GM13977 (cell line): ENCODE measurements at regions of chr16 and their contacts with region 1.

Region 1: GRCh38 chr16:25838724-25839186 is 147.0 kb downstream of the HS3ST4 start:
- DNase-seq: peak; percentile 24
- CTCF ChIP-seq: peak; percentile 72

Region 2: DNA sequence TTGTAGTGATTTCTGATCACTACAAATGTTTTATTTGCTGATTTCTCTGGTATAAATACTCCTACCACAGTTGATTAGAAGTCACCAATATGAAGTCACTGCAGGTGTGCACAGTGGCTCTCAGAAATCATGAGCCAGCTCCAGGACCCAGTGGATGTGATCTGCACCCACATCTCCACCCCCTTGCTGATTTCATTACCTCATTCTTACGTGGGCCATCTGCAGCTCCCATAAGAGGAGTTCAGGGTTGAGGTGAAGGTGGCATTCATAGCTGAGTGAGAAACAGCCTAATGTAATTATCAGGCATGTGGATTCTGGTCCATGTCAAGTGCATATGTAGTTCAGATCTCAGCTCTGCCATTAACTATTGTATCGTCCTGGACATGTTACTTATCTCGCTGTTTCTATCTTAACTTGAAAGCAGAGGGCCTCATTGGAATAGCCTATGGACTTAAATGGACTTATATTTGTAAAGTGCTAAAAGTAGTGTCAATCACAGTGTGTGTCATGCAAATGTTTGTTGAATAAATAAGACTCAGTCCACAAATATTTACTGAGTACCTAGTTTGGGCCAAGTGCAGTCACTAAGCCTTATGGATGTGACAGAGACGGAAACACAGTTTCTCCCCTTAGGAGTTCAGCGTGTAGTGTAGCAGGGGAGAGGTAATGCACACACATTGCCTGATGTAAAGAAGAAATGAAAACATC is 540.4 kb before region 1 on chr16:
- in situ Hi-C with region 1: loop called (anchors 25 kb)
- DNase-seq: no peak
- CTCF ChIP-seq: no peak

Region 3: DNA sequence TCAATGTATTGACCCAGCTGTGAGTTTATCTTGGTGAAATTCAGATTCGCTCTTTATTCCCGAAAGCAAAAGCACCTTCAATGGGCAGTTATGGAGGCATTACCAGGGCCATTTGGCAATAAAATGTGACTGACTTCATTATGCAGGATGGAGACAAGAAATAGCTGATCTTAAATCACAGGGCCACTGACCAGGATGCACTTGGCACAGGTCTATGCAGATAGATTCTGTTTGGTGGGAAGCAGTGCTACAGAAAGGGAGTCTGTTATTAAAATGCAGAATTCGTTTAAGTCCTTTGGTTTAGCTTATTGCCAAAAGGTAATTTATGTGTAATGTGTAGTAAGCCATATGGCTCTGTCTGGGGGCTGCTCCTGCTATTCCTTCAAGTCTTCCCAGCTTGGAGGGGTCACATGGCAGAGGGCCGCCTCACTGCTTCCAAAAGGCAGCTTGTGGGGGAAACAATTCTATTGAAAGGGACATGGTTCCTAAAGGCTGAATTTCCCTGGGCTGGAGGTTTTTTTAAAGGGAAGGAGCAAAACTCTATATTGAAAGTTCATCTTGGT is 92.8 kb after region 1 on chr16:
- in situ Hi-C with region 1: no loop called
- DNase-seq: no peak
- CTCF ChIP-seq: no peak

Region 4: DNA sequence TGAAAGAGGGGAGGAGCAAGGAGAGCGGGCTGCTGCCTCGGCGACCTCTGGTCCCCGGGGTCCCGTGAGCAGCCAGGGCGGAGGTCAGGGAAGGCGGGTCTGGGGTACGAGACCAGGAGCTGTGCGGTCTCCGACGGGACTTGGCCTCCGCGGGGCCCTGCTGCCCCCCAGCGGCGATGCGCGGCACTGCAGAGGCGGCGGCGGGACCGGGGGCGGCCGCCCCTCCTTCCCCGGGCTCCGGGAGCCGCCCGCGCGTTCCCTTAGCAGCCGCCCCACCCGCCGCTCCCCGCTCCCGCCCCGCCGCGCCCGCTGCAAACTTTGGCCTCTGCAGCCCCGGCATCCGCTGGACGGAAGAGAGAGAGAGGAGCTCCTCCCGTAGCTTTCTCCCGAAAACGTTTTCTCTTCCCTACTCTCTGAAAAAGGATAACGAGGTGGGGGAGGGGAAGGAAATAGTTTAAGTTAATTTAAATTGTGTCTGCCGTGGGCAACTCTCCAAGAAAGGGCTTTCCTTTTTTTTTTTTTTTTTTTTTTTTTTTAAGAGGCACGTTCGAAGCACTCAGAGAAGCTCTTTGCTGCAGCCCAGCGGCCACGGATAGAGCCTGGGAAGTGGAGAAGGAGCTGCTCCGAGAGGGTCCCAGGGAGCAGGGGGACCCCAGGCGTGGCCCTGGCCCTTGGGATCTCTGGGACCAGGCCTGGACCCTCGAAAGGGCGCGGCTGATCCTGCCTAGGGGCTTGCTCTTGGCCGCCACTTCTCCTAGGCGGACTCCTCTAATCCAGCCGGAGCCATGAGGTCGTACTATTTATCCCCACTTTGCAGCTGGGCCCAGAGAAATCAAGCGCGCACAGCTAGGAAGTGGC is 1271.1 kb after region 1 on chr16:
- in situ Hi-C with region 1: loop called (anchors 25 kb)
- DNase-seq: peak; percentile 87
- CTCF ChIP-seq: peak; percentile 98

Region 5: DNA sequence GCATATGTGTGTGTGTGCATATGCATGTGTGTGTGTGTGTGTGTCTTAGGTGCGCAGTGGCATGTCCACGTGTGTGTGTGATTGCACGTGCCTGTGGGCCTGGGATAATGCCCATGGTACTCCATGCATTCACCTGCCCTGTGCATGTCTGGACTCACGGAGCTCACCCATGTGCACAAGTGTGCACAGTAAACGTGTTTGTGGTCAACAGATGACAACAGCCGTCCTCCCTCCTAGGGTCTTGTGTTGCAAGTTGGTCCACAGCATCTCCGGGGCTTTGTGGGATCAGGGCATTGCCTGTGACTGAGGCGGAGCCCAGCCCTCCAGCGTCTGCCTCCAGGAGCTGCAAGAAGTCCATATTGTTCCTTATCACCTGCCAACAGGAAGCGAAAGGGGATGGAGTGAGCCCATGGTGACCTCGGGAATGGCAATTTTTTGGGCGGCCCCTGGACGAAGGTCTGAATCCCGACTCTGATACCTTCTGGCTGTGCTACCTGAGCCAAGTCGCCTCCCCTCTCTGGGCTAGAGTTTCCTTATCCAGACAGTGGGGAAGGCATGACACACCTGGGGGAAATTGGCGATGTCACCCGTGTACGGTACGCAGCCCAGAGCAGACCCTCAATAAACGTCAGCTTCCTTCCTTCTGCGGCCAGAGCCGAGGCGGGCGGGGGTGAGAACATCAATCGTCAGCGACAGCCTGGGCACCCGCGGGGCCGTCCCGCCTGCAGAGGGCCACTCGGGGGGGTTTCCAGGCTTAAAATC is 1610.9 kb after region 1 on chr16:
- in situ Hi-C with region 1: loop called (anchors 25 kb)
- DNase-seq: peak; percentile 87
- CTCF ChIP-seq: peak; percentile 8